ENCODE measurements at regions of chr6 and their contacts with region 1.

Region 1: GRCh38 chr6:147506704-147507114 is 1.8 kb upstream of the SAMD5 start:
- DNase-seq: peak; percentile 16 to 83 (median 78)
- H3K4me3 ChIP-seq: peak overlapping the region; percentile 45
- H3K27ac ChIP-seq: no peak overlapping the region
- H3K4me1 ChIP-seq: peaks cover 2% of the 10 kb centered on the region
- H3K27me3 ChIP-seq: no peaks in the 10 kb centered on the region
- CTCF ChIP-seq: peak in 2 of 3 donors; percentile 70 to 74
- EP300 ChIP-seq: no peak
- POLR2A ChIP-seq: no peak

Region 2: GRCh38 chr6:147434516-147434915 is 72.2 kb before region 1 on chr6:
- intact Hi-C with region 1: no loop called
- DNase-seq: no peak
- H3K4me3 ChIP-seq: no peak overlapping the region
- H3K27ac ChIP-seq: no peak overlapping the region
- H3K4me1 ChIP-seq: no peaks in the 10 kb centered on the region
- H3K27me3 ChIP-seq: no peaks in the 10 kb centered on the region
- CTCF ChIP-seq: no peak
- EP300 ChIP-seq: no peak
- POLR2A ChIP-seq: no peak

Region 3: DNA sequence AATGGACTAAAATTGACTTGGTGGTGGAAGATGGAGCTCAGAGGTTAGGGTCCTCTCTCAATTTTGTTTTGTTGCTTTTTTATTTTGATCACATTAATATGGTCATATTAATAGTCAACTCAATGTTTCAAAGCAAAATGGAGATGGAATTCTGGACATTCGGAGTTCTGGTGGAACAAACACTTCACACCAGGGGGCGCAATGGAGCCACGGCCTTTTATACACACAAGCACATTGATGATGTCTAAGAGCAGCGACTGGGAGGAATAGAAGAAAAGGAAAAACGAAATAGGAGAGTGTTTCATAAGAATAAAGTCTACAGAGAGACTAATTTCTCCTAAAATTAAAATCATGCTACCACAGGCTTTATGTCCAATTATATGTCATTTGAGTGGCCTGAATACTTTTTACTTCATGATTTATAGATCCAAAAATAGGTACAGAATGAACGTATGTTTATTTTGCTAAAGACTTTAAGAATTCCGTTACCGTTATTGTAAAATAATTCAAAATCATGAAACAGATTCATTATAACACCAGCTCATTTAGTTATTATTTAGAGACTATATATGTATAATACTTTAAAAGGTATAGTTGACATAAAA is 638.3 kb after region 1 on chr6:
- intact Hi-C with region 1: loop called in 2 of 4 experiments (anchors 10 kb)
- DNase-seq: peak; percentile 54 to 85 (median 70)
- H3K4me3 ChIP-seq: no peak overlapping the region
- H3K27ac ChIP-seq: no peak overlapping the region
- H3K4me1 ChIP-seq: no peaks in the 10 kb centered on the region
- H3K27me3 ChIP-seq: no peaks in the 10 kb centered on the region
- CTCF ChIP-seq: peak; percentile 24 to 43 (median 27)
- EP300 ChIP-seq: no peak
- POLR2A ChIP-seq: no peak

Region 4: GRCh38 chr6:148157542-148158240 is 651.0 kb after region 1 on chr6:
- intact Hi-C with region 1: loop called in 2 of 4 experiments (anchors 10 kb)
- DNase-seq: no peak
- H3K4me3 ChIP-seq: no peak overlapping the region
- H3K27ac ChIP-seq: no peak overlapping the region
- H3K4me1 ChIP-seq: no peaks in the 10 kb centered on the region
- H3K27me3 ChIP-seq: no peaks in the 10 kb centered on the region
- CTCF ChIP-seq: no peak
- EP300 ChIP-seq: no peak
- POLR2A ChIP-seq: no peak

Region 5: GRCh38 chr6:148166339-148166968 is 659.7 kb after region 1 on chr6:
- intact Hi-C with region 1: loop called in 1 of 4 experiments (anchors 10 kb)
- DNase-seq: no peak
- H3K4me3 ChIP-seq: no peak overlapping the region
- H3K27ac ChIP-seq: no peak overlapping the region
- H3K4me1 ChIP-seq: no peaks in the 10 kb centered on the region
- H3K27me3 ChIP-seq: no peaks in the 10 kb centered on the region
- CTCF ChIP-seq: peak in 2 of 3 donors; percentile 14 to 55
- EP300 ChIP-seq: no peak
- POLR2A ChIP-seq: no peak

Region 6: DNA sequence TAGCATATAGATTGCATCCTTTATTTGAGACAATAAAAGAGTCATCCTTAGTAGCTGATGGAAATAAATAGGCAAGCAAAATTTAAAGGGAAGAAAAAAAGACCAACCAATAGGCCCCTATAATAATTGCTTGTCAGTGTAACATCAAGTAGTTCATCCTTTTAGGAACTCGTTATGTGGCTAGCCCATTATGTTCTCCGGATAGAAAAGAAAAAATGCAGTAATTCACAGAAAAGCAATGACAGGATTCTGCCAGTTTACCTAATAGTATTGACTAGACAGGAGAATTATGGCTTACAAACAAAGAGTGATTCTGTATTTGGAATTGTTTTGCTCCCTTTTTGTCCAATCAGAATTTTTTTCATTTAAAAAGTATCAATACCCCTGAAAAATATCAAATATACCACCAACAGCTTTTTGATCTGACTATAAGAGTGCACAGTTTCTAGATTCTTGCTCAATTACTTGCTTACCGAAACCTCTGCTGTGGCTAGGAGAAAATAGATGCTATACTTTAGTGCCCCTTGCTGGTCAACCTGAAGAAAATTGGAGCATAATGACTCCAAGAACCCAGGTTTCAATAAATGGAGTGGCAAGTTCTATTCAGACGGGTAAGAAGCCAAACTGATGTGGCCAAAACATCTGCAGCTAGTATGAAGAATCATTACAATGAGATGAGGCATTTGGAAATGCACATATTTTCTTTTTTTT is 744.4 kb after region 1 on chr6:
- intact Hi-C with region 1: loop called in 1 of 4 experiments (anchors 5 kb)
- DNase-seq: no peak
- H3K4me3 ChIP-seq: no peak overlapping the region
- H3K27ac ChIP-seq: no peak overlapping the region
- H3K4me1 ChIP-seq: no peaks in the 10 kb centered on the region
- H3K27me3 ChIP-seq: no peaks in the 10 kb centered on the region
- CTCF ChIP-seq: peak in 2 of 3 donors; percentile 42 to 52
- EP300 ChIP-seq: no peak
- POLR2A ChIP-seq: no peak

Region 7: GRCh38 chr6:148464319-148465010 is 957.8 kb after region 1 on chr6:
- intact Hi-C with region 1: loop called in 1 of 4 experiments (anchors 5 kb)
- DNase-seq: peak; percentile 51 to 80 (median 79)
- H3K4me3 ChIP-seq: no peak overlapping the region
- H3K27ac ChIP-seq: no peak overlapping the region
- H3K4me1 ChIP-seq: peaks cover 4% of the 10 kb centered on the region
- H3K27me3 ChIP-seq: no peaks in the 10 kb centered on the region
- CTCF ChIP-seq: peak; percentile 53 to 92 (median 80)
- EP300 ChIP-seq: no peak
- POLR2A ChIP-seq: no peak

Measured in ovary (tissue), 10 donors.